ENCODE measurements at regions of chr1 and their contacts with region 1.

Region 1: DNA sequence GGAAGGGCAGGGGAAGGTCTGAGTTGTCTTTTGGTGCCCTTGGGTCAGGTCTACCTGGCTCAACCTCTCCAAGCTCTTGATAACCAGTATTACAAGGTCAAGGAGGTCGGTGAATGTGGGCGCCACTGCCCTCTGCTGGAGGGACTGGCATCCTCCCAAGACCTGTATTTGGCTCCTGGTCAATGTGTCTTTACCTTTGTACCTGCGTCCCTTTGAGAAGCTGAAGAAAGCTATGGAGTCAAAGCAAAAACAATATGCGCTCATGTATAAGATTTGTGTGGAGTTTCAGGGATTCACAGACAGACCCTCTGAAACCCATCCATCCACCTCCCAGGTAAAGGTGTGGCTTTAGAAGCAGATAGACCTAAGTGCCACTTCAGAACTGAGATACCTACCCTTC is 61.8 kb upstream of the NBL1 start:
- DNase-seq: peak; percentile 55 to 69 (median 66)
- H3K4me3 ChIP-seq: no peak overlapping the region
- H3K27ac ChIP-seq: no peak overlapping the region
- H3K4me1 ChIP-seq: no peaks in the 10 kb centered on the region
- H3K27me3 ChIP-seq: no peaks in the 10 kb centered on the region

Region 2: GRCh38 chr1:19439464-19440171 is 142.7 kb before region 1 on chr1:
- CTCF ChIA-PET with region 1: interaction called, 20 read pairs
- POLR2A ChIA-PET with region 1: interaction called, 3 read pairs
- DNase-seq: peak; percentile 48 to 60 (median 58)
- H3K4me3 ChIP-seq: no peak overlapping the region
- H3K27ac ChIP-seq: no peak overlapping the region
- H3K4me1 ChIP-seq: peaks cover 11 to 65% (median 49%) of the 10 kb centered on the region in 4 experiments
- H3K27me3 ChIP-seq: no peaks in the 10 kb centered on the region

Region 3: GRCh38 chr1:19485362-19486187 is 96.7 kb before region 1 on chr1 and contains the start of gene CAPZB:
- CTCF ChIA-PET with region 1: interaction called, 61 read pairs
- POLR2A ChIA-PET with region 1: no interaction called
- DNase-seq: peak; percentile 87 to 93 (median 89)
- H3K4me3 ChIP-seq: peak within 1 kb of the TSS; percentile 76 to 94 (median 87)
- H3K27ac ChIP-seq: peak within 1 kb of the TSS; percentile 70 to 93
- H3K4me1 ChIP-seq: peaks cover 24 to 61% (median 57%) of the 10 kb centered on the region in 4 experiments
- H3K27me3 ChIP-seq: no peaks in the 10 kb centered on the region

Region 4: DNA sequence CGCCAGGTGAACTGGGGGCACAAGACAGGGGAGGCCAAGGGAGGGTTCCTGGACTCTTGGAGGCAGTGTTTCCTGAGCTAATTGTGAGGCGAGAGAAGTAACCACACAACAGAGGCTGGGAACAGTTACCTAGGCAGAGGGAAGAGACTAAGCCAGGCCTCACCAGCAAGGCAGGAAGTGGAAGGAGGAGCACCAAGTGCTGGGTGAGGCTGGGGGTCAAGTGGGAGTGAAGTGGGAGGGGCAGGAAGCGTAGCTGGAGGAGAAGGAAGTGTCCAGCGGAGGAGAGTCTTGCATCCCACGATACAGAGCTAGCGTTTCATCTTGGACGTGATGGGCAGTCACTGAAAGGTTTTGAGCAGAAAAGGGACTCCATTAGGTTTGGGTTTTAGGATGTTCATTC is 48.7 kb before region 1 on chr1:
- CTCF ChIA-PET with region 1: no interaction called
- POLR2A ChIA-PET with region 1: no interaction called
- DNase-seq: no peak
- H3K4me3 ChIP-seq: no peak overlapping the region
- H3K27ac ChIP-seq: no peak overlapping the region
- H3K4me1 ChIP-seq: peaks cover 0 to 6% (median 5%) of the 10 kb centered on the region in 4 experiments
- H3K27me3 ChIP-seq: no peaks in the 10 kb centered on the region

Region 5: GRCh38 chr1:19596714-19597495 is 14.6 kb after region 1 on chr1:
- CTCF ChIA-PET with region 1: interaction called, 52 read pairs
- POLR2A ChIA-PET with region 1: interaction called, 3 read pairs
- DNase-seq: peak; percentile 98 to 100 (median 99)
- H3K4me3 ChIP-seq: peak overlapping the region; percentile 43 to 86 (median 73)
- H3K27ac ChIP-seq: peak overlapping the region; percentile 98
- H3K4me1 ChIP-seq: peaks cover 10 to 44% (median 26%) of the 10 kb centered on the region in 4 experiments
- H3K27me3 ChIP-seq: no peaks in the 10 kb centered on the region

Region 6: GRCh38 chr1:19651141-19651737 is 68.9 kb after region 1 on chr1:
- CTCF ChIA-PET with region 1: interaction called, 13 read pairs
- POLR2A ChIA-PET with region 1: interaction called, 3 read pairs
- DNase-seq: peak; percentile 53 to 71 (median 70)
- H3K4me3 ChIP-seq: peak overlapping the region in 2 of 7 experiments; percentile 20 to 30
- H3K27ac ChIP-seq: no peak overlapping the region
- H3K4me1 ChIP-seq: peaks cover 0 to 39% (median 25%) of the 10 kb centered on the region in 4 experiments
- H3K27me3 ChIP-seq: no peaks in the 10 kb centered on the region

Region 7: DNA sequence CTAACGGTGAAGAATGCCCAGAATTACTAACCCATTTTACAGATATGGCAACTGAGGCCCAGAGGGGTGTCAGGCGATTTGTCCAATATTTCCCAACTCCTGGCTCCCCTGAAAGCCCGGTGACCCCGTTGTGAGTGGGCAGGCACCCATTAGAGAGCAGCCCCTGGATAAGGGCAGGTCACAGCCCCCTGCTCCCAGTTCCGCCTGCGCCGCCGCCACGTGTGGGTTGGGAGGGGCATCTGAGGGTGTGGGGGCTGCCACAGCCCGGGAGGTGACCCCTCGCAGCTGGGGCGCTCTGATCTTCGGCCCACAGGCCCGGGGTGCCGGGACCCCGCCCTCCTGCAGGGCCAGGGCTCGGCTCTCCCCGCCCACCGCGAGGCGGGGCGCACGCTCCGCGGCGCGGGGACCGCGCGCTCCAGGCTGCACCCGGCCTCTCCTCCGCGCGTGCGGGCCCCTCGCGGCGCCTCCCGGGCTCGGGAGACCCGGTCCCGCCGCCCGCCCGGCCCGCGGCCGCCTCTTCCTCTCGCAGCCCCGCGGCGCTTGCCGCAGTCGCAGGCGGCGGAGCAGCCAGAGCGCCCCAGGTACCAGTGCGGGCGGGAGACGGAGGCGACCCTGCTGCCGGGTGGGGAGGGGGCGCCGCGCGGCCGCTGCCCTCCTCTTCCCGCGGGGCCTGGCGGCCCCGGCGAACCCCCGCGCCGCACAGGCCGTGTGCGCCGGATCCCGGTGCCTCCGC is 82.3 kb after region 1 on chr1 and contains the start of gene HTR6:
- CTCF ChIA-PET with region 1: no interaction called
- POLR2A ChIA-PET with region 1: no interaction called
- DNase-seq: no peak
- H3K4me3 ChIP-seq: peak within 1 kb of the TSS; percentile 10 to 63 (median 22)
- H3K27ac ChIP-seq: no peak within 1 kb of the TSS
- H3K4me1 ChIP-seq: peaks cover 0 to 14% (median 11%) of the 10 kb centered on the region in 4 experiments
- H3K27me3 ChIP-seq: peaks cover 3 to 79% (median 47%) of the 10 kb centered on the region in 5 experiments

Region 8: GRCh38 chr1:19844731-19845495 is 262.6 kb after region 1 on chr1:
- CTCF ChIA-PET with region 1: no interaction called
- POLR2A ChIA-PET with region 1: no interaction called
- DNase-seq: peak in 2 of 3 donors; percentile 31 to 44
- H3K4me3 ChIP-seq: no peak overlapping the region
- H3K27ac ChIP-seq: no peak overlapping the region
- H3K4me1 ChIP-seq: peaks cover 0 to 4% (median 0%) of the 10 kb centered on the region in 4 experiments
- H3K27me3 ChIP-seq: peaks cover 0 to 8% (median 4%) of the 10 kb centered on the region in 5 experiments

Region 9: GRCh38 chr1:20271498-20272400 is 689.4 kb after region 1 on chr1:
- CTCF ChIA-PET with region 1: no interaction called
- POLR2A ChIA-PET with region 1: no interaction called
- DNase-seq: no peak
- H3K4me3 ChIP-seq: no peak overlapping the region
- H3K27ac ChIP-seq: no peak overlapping the region
- H3K4me1 ChIP-seq: no peaks in the 10 kb centered on the region
- H3K27me3 ChIP-seq: peaks cover 0 to 38% (median 3%) of the 10 kb centered on the region in 5 experiments

Measured in common myeloid progenitor, CD34-positive (primary cell).